ENCODE measurements at regions of chr19 and their contacts with region 1.

Region 1: DNA sequence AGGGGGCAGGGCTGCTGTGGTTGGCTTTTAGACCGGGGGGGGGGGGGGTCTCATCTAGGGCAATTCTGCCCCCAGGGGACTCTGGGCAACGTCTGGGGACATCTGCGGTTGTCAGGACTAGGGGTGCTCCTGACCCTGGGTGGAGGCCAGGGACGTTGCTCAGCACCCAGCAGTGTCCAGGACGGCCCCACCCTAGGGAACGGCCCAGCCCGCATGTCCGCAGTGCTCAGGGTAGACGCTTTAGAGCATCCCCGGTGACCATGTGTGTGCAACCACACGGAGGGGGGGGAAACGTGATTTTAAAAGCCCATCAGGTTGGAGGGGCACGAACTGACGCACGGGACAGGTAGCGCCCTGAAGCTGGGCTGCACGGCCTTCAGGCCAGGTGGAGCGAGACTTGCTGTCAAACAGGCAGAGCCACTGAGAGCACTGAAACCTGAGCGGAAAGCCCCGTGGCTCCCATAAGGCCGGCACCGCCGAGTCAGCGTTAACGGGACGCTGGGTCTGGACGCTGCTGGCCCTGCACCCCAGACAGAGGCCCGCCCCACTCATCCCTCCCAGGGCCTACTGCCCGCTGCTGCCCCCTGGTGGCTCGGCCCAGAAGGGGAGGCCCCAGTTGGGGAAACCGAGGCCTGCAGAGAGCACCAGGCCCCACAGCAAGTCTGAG is 8.3 kb downstream of the CACTIN start:
- DNase-seq: no peak
- ATAC-seq: peak; percentile 75

Region 2: DNA sequence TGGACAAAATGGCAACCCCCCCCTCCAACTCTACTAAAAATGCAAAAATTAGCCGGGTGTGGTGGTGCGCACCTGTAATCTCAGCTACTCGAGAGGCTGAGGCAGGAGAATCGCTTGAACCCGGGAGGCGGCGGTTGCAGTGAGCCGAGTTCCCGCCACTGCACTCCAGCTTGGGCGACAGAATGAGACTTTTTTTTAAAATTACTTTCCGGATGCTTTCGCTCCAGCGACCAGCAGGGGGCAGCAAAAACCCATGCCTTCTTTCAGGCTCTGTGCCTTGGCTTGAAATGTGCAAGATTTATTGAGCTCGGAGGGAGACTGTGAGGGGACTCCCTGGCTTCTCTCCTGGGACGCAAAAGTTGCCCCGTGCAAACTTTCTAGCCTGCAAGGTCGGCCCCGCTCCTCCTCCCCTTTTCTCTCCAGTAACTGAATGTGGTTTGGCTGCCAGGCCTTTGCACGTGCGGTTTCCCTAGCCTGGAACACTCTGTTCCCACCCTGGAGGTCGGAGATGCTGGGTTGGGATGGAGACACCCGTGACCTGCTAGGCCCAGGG is 313.3 kb before region 1 on chr19:
- intact Hi-C with region 1: no loop called
- DNase-seq: no peak
- ATAC-seq: peak; percentile 46

Region 3: DNA sequence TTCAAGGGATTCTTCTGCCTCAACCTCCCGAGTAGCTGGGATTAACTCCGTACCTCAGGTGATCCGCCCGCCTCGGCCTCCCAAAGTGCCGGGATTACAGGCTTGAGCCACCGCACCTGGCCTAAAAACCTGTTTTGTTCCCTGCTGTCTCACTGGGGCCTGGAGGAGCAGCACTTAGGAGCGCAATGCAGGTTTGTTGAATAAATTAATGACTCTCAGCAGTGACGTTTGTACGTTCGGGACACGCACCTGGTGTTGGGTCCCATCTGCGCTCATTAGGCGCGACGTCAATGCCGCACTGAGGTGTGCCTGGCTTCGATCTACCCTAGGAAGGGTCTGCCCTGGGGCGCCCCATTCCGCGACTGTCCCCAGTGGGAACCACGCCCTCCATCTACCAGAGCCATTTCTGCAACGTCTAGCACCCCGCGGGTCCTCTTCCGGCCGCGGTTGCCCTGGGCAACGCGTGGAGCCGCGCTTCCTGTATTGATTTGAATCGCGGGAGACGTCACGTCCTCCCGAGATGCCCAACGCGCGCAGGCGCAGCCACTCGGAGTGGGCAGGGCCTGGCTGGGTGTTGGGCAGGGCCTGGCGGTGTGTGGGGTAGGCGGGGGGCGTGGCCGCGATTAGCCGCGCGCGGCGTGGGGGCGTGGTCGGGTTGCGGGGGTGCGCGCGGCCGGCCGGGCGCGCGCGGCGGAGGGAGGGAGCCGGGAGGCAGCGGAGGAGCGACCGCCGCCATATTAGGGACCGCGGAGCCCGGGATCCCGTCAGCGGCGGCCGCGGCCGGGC is 112.5 kb before region 1 on chr19 and contains the start of gene FZR1:
- intact Hi-C with region 1: loop called (anchors 5 kb)
- DNase-seq: peak; percentile 99
- ATAC-seq: peak; percentile 98
- total RNA-seq, gene FZR1: 19.4 TPM

Region 4: GRCh38 chr19:3544742-3545668 is 73.3 kb before region 1 on chr19:
- intact Hi-C with region 1: loop called (anchors 2 kb)
- DNase-seq: peak; percentile 85
- ATAC-seq: peak; percentile 60

Region 5: DNA sequence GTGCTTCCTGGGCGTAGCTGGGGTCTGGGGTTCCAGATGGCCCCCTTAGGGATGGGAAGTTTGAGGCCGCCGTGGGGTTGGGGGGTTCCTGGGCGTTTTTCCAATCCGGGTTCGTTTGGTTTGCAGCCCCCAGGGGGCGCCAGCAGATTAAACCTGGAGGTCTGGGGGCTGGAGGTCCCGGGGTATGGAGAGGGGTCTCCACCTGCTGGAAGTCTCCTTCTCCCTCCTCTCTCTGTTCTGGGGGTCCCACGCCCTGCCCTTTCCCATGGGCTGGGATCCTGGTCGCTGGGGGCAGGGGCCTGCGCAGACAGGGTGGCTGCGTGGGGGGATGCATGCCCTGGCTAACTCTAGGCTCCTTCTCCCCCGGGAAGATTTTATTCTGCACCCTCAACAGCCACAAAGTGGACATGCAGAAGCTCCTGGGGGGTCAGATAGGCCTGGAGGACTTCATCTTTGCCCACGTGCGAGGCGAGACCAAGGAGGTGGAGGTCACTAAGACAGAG is 32.1 kb before region 1 on chr19:
- intact Hi-C with region 1: loop called (anchors 2 kb)
- DNase-seq: no peak
- ATAC-seq: no peak

Region 6: GRCh38 chr19:3642987-3643673 is 24.9 kb after region 1 on chr19:
- intact Hi-C with region 1: no loop called
- DNase-seq: no peak
- ATAC-seq: no peak